Mammary epithelial cell (primary cell): ENCODE measurements at regions of chr19 and their contacts with region 1.

Region 1: DNA sequence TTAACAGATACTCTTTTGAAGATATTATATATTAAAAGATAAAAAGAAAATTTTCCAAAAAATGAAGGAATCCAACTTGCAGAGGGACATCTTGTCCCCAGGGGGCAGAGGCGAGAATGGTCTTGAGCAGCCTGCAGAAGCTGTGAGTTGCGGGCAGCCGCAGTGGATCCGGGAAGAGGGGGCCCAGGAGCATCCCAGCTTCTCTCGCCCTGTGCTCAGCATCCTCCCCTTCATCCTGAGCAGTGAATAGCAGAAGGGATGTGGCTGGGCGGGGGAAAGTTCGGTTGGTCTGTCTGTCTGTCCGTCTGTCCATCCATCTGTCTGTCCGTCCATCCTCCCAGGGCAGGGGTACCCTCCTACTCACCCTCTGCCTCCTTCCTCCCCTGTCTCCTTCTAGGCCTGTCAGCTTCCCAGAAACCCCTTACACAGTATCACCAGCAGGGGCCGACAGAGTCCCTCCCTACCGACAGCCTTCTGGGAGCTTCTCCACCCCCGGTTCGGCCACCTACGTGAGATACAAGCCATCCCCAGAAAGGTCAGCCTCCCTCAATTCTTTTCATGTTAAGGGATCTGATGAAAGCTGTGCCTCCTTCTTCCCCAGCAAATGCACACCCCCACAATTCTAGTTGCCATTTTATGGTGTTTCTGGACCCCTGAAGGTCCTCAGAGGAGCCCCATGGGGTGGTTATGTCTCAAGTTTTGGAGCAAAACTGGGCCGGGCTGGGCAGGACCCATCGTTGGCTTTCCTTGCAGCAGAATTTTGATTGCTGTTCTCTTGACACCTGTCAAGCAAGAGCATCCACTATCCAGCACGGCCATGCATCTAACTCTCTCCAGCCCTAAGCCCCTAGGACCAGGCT is 81.6 kb downstream of the DPF1 start:
- DNase-seq: peak; percentile 32
- H3K4me3 ChIP-seq: no peak overlapping the region
- H3K27ac ChIP-seq: no peak overlapping the region
- H3K4me1 ChIP-seq: no peaks in the 10 kb centered on the region
- H3K27me3 ChIP-seq: no peaks in the 10 kb centered on the region
- CTCF ChIP-seq: peak; percentile 83 to 90

Region 2: GRCh38 chr19:37885392-37885791 is 257.0 kb before region 1 on chr19:
- CTCF ChIA-PET with region 1: no interaction called
- dilution Hi-C with region 1: loop called (anchors 5 kb)
- in situ Hi-C with region 1: no loop called
- intact Hi-C with region 1: no loop called
- DNase-seq: no peak
- H3K4me3 ChIP-seq: no peak overlapping the region
- H3K27ac ChIP-seq: no peak overlapping the region
- H3K4me1 ChIP-seq: no peaks in the 10 kb centered on the region
- H3K27me3 ChIP-seq: peaks cover 3% of the 10 kb centered on the region
- CTCF ChIP-seq: no peak

Region 3: DNA sequence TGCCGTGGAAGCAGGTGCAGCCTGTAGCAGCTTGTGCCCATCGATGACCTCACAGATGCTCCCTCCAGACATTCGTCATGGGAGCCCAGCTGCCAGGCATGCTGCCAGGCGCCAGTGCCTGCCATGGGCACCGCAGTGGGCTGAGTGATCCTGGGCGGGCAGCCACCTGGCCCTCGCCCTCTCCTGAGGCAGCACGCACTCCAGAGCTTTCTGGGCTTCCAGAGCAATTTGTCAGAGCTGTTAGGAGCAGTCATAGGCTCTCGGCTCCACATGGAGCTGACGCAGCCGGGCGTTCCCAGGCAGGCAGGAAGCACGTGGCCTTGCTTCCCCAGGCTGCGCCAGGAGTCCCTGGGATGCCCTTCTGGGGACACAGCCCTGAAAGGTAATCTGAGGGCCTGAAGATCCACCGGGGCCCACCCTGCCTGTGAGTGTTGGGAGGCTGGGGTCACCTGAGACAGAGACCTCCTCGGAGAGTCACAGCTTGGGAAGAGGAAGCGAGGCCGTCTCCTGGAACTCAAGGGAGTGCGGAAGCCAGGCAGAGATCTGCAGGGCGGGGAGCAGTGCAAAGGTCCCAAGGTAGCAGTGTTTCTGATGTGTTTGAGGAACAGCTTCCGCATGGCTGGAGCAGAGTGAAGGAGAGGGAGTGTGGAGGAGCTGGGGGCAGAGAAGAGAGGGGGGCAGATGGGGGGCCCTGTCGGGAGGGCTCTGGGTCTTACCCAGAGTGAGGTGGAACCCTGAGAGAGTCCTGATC is 31.1 kb after region 1 on chr19:
- CTCF ChIA-PET with region 1: no interaction called
- dilution Hi-C with region 1: no loop called
- in situ Hi-C with region 1: no loop called
- intact Hi-C with region 1: loop called (anchors 1 kb)
- DNase-seq: peak; percentile 96
- H3K4me3 ChIP-seq: peak overlapping the region; percentile 3 to 25 (median 14)
- H3K27ac ChIP-seq: peak overlapping the region; percentile 71
- H3K4me1 ChIP-seq: peaks cover 16% of the 10 kb centered on the region
- H3K27me3 ChIP-seq: no peaks in the 10 kb centered on the region
- CTCF ChIP-seq: no peak

Region 4: GRCh38 chr19:38194056-38194701 is 51.8 kb after region 1 on chr19:
- CTCF ChIA-PET with region 1: no interaction called
- dilution Hi-C with region 1: loop called (anchors 5 kb)
- in situ Hi-C with region 1: no loop called
- intact Hi-C with region 1: no loop called
- DNase-seq: peak; percentile 54
- H3K4me3 ChIP-seq: no peak overlapping the region
- H3K27ac ChIP-seq: no peak overlapping the region
- H3K4me1 ChIP-seq: peaks cover 5% of the 10 kb centered on the region
- H3K27me3 ChIP-seq: no peaks in the 10 kb centered on the region
- CTCF ChIP-seq: no peak

Region 5: GRCh38 chr19:38216785-38217641 is 74.6 kb after region 1 on chr19:
- CTCF ChIA-PET with region 1: interaction called, 3 read pairs
- dilution Hi-C with region 1: loop called (anchors 5 kb)
- in situ Hi-C with region 1: loop called in 1 of 2 experiments (anchors 10 kb)
- intact Hi-C with region 1: no loop called
- DNase-seq: no peak
- H3K4me3 ChIP-seq: no peak overlapping the region
- H3K27ac ChIP-seq: no peak overlapping the region
- H3K4me1 ChIP-seq: peaks cover 13% of the 10 kb centered on the region
- H3K27me3 ChIP-seq: no peaks in the 10 kb centered on the region
- CTCF ChIP-seq: no peak

Region 6: GRCh38 chr19:38224014-38224862 is 81.8 kb after region 1 on chr19 and contains the start of gene DPF1:
- CTCF ChIA-PET with region 1: interaction called, 3 read pairs
- dilution Hi-C with region 1: loop called (anchors 5 kb)
- in situ Hi-C with region 1: loop called in 1 of 2 experiments (anchors 10 kb)
- intact Hi-C with region 1: loop called (anchors 2 kb)
- DNase-seq: peak; percentile 79
- H3K4me3 ChIP-seq: peak within 1 kb of the TSS; percentile 42 to 62 (median 59)
- H3K27ac ChIP-seq: no peak within 1 kb of the TSS
- H3K4me1 ChIP-seq: peaks cover 21% of the 10 kb centered on the region
- H3K27me3 ChIP-seq: peaks cover 12% of the 10 kb centered on the region
- CTCF ChIP-seq: peak; percentile 34 to 43
- total RNA-seq, gene DPF1: 3.0 to 6.2 TPM

Region 7: DNA sequence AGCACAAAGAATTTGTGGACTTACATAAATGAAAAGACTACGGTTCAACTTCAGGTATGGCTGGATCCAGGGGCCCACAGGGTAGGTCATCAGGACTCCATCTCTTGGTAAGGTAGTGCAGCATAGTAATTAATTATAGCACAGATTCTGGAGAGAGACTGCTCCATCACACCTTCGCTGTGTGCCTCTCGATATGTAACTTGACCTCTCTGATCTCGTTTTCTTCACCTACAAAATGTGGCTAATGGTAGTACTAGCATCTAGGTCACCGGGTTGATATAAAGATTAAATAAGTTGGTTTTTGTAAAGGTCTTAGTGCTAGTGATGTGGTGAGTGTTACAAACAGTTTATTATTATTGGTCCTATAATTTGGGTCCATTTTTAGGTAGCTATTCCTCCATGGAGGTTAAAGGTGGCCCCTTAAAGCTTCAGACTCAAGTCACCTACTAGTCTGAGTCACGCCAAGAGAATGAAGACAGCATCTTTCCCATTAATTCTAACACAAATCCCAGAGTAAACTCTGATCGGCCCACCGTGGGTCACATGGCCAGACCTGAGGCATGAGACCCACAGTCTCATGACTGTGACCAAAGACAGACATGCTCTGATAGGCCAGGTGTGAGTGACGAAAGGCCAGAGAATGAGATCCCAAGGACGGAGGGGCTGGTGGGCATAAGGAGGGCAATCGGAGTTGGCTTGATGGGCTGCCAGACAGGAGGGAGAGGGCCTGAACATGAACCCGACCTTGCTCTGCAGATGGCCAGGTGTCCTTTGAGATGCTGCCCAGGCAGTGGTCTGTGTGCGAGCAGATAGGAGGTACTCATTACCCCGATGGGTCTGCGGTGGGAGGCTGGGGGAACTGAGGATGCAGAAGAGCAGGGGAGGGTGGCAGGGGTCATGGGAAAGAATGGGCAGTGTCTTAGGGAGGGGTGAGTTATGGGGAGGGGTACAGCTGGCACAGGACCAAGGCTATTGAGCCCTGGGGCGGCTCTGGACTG is 213.6 kb after region 1 on chr19:
- CTCF ChIA-PET with region 1: no interaction called
- dilution Hi-C with region 1: loop called (anchors 5 kb)
- in situ Hi-C with region 1: no loop called
- intact Hi-C with region 1: no loop called
- DNase-seq: no peak
- H3K4me3 ChIP-seq: no peak overlapping the region
- H3K27ac ChIP-seq: no peak overlapping the region
- H3K4me1 ChIP-seq: peaks cover 1% of the 10 kb centered on the region
- H3K27me3 ChIP-seq: peaks cover 14% of the 10 kb centered on the region
- CTCF ChIP-seq: no peak